PC-9 (cell line): ENCODE measurements at regions of chr1 and their contacts with region 1.

Region 1: DNA sequence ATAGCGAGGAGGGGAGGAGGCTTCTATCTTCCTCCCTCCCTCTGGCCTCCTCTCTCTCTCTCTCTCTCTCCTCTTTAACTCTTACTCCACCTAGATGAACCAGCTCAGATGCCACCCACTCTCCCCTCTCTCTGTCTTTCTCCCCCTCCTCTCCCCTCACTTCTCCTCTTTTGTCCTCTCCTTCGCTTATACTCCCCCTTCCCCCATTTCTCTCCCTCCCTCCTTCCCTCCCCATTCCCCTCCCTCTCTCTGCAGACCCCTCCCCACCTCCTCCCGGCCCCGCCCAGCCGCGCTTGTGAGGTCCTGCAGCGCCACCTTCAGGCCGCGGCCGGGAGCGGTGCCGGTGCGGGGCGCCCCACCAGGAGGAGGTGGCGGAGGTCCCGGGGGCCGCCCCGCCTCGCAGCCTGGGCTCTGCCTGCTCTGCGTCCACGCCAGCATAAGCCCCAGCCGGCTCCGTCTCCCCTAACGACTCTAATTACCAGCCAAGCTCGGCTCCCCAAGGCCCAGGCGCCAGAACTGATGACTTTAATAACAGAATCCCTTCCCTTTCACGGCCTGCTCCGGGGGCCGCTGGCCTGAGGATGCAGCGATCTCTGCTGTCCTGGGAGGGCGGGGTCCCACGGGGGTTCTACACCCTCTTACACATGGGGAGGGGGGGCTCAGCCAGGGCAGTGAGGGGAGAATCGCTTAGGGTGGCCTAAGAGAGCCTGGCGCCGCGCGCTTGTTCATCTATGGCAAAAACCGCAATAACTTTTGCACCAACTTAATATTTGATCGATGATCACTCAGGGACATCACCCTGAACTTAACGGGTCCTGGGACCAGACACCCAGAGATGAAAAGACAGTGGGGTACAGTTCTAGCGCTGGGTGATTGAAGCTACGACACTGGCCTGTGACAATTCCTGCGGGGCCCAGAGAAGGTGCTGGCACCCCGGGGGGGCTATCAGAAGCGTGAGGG is 637.3 kb downstream of the MATN1 start:
- DNase-seq: peak in 1 of 2 experiments; percentile 23
- H3K4me3 ChIP-seq: no peak overlapping the region
- H3K27ac ChIP-seq: no peak overlapping the region
- H3K4me1 ChIP-seq: peaks cover 14% of the 10 kb centered on the region
- H3K27me3 ChIP-seq: no peaks in the 10 kb centered on the region
- CTCF ChIP-seq: peak; percentile 86

Region 2: GRCh38 chr1:29513357-29513756 is 572.7 kb before region 1 on chr1:
- CTCF ChIA-PET with region 1: no interaction called
- POLR2A ChIA-PET with region 1: no interaction called
- intact Hi-C with region 1: loop called (anchors 10 kb)
- DNase-seq: peak; percentile 42 to 54
- H3K4me3 ChIP-seq: no peak overlapping the region
- H3K27ac ChIP-seq: no peak overlapping the region
- H3K4me1 ChIP-seq: no peaks in the 10 kb centered on the region
- H3K27me3 ChIP-seq: no peaks in the 10 kb centered on the region
- CTCF ChIP-seq: peak; percentile 73

Region 3: DNA sequence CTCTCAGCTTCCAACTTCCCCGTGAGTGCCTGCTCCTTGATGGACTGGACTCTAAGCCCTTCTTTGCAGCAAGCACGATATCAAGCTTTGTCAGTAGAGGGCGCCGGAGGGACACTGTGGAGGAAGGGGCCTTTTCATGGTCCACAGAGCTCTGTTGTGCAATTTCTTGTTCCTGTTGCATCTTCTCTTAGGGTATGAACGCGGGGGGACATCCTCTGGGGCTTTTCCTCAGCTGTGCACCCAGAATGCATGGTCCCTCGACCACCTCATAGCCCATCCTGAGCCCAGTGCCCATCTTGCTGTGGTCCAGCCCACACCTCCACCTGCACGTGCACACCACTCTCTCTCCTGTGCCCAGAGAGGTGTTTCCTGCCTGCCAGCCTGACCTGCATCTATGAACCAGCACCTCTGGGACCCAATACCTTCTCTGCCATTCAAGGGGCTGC is 293.0 kb before region 1 on chr1:
- CTCF ChIA-PET with region 1: no interaction called
- POLR2A ChIA-PET with region 1: no interaction called
- intact Hi-C with region 1: loop called (anchors 10 kb)
- DNase-seq: peak; percentile 55 to 71
- H3K4me3 ChIP-seq: no peak overlapping the region
- H3K27ac ChIP-seq: no peak overlapping the region
- H3K4me1 ChIP-seq: peaks cover 17% of the 10 kb centered on the region; the same call in 1 of the 2 replicates
- H3K27me3 ChIP-seq: no peaks in the 10 kb centered on the region
- CTCF ChIP-seq: peak; percentile 77

Region 4: DNA sequence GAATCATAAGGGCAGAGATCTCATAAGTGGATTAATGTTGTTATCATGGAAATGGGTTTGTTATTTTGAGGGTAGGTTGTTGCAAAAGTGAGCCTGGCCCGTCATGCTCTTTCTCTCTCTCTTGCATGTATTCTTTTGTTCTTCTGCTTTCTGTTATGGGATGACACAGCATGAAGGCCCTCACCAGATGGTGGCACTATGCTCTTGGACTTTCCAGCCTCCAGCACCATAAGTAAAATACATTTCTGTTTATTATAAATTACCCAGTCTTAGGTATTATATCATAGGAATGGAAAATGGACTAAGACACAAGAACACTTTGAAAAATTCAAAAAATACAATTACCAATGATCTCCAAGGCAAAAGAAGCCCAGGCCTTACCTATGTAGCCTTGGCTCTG is 173.7 kb before region 1 on chr1:
- CTCF ChIA-PET with region 1: no interaction called
- POLR2A ChIA-PET with region 1: no interaction called
- intact Hi-C with region 1: loop called (anchors 1 kb)
- DNase-seq: peak in 1 of 2 experiments; percentile 8
- H3K4me3 ChIP-seq: no peak overlapping the region
- H3K27ac ChIP-seq: no peak overlapping the region
- H3K4me1 ChIP-seq: no peaks in the 10 kb centered on the region
- H3K27me3 ChIP-seq: no peaks in the 10 kb centered on the region
- CTCF ChIP-seq: peak; percentile 68

Region 5: DNA sequence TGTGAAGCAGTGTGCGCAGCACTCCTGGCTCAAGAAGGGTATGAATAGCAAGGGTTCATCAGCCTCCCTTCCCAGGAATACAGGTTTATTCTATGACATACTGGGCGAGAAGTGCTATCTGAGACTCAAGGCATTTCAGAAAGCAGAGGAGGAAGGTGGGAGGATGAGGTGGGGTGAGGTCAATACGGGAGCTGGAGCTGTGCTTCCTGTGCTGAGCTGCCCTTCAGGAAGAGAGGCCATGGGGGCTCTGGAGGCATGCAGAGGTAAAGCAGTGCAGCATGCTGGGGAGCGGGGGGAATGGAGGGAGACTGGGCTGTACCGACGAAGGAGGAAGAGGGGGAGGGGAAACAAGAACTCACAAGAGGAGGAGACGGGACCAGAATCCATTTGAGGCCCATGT is 132.1 kb before region 1 on chr1:
- CTCF ChIA-PET with region 1: no interaction called
- POLR2A ChIA-PET with region 1: no interaction called
- intact Hi-C with region 1: no loop called
- DNase-seq: no peak
- H3K4me3 ChIP-seq: no peak overlapping the region
- H3K27ac ChIP-seq: no peak overlapping the region
- H3K4me1 ChIP-seq: no peaks in the 10 kb centered on the region
- H3K27me3 ChIP-seq: no peaks in the 10 kb centered on the region
- CTCF ChIP-seq: no peak

Region 6: GRCh38 chr1:29975036-29975694 is 110.9 kb before region 1 on chr1:
- CTCF ChIA-PET with region 1: no interaction called
- POLR2A ChIA-PET with region 1: no interaction called
- intact Hi-C with region 1: loop called (anchors 10 kb)
- DNase-seq: peak in 1 of 2 experiments; percentile 16
- H3K4me3 ChIP-seq: no peak overlapping the region
- H3K27ac ChIP-seq: no peak overlapping the region; the same call in 1 of the 2 replicates
- H3K4me1 ChIP-seq: peaks cover 18% of the 10 kb centered on the region
- H3K27me3 ChIP-seq: no peaks in the 10 kb centered on the region
- CTCF ChIP-seq: no peak

Region 7: DNA sequence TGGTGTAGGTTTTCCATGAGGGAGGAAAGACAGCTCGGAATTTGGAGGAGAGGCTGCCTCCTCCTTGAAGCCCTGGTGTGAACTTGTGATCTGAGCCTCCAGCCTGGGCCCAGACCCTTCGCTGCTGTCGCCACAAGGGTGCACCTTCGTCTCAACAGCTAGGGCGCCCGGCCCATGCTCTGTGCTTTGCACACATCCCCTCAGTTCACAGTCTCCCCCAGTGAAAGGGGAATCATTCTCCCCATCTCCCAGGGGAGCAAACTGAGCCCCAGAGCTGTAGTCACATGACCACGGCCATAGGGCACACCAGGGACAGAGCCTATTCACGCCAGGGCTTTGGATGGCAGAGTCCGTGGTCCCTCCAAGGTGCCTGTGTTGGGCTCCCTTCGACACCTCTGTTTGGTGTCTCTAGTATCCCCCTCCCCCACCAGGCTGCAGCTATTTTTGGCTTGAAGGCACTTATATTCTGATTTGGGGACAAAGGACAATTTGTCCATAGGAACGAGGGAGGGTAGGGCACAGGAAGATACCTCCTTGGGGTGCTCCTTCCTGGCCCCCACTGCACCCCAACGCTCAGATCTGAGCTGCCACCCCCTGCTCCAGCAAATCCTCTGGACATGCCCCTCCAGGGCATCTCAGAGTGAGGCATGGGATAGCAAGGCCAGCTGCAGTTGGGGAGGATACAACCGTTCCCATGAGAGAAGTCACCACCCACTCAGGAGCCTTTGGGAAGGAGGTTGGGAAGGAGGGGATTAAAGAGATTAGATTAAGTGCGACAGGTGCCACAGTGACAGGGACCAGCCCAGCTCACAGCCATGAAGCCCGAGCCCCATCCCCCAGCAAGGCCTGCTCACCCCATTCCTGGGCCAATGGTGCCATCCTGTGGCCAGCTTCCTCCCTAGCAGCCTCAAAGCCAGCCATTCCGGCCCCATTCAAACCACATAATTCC is 621.6 kb after region 1 on chr1:
- CTCF ChIA-PET with region 1: no interaction called
- POLR2A ChIA-PET with region 1: no interaction called
- intact Hi-C with region 1: loop called (anchors 5 kb)
- DNase-seq: peak in 1 of 2 experiments; percentile 75
- H3K4me3 ChIP-seq: no peak overlapping the region
- H3K27ac ChIP-seq: no peak overlapping the region
- H3K4me1 ChIP-seq: no peaks in the 10 kb centered on the region
- H3K27me3 ChIP-seq: no peaks in the 10 kb centered on the region
- CTCF ChIP-seq: peak; percentile 85